ENCODE measurements at regions of chr19 and their contacts with region 1.

Region 1: DNA sequence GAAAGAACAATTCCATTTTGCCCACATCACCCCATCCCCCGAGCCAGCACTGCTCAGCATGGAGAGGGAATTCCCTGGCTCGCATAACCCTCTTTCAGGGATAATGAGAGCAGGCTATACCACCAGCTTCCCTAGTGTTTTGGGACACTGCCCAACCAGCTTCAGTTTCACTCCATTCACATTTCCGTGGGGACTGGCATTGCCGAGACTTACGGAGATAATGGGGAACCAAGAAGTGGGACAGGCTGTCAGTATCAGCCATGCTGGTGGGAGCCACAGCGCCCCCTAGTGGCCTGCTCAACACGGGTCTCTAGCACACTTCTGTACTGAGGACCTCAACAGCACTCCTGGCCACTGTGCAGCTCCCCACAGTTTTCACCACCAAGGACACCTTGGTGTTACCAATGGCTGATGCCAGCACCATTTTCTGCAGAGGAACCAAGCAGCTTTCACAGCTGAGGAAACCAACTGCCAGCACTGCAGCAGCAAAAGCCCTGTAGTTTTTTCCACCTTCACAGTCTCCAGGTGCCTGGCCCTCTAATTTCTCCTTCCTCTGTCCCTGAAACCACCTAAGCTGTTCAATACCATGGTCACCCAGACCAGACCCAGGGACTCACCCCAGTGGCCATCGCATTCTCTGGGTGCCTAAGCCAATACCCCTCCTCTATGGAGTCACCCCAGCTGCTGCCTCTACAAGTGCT is 23.7 kb downstream of the SLC6A16 start:
- DNase-seq: peak; percentile 43
- ATAC-seq: peak; percentile 88
- H3K4me3 ChIP-seq: peak overlapping the region; percentile 16; the same call in 1 of the 2 replicates
- H3K27ac ChIP-seq: no peak overlapping the region
- H3K4me1 ChIP-seq: no peaks in the 10 kb centered on the region
- H3K27me3 ChIP-seq: no peaks in the 10 kb centered on the region
- CTCF ChIP-seq: peak; percentile 70
- POLR2A ChIP-seq: no peak
- RAD21 ChIP-seq: peak; percentile 47

Region 2: DNA sequence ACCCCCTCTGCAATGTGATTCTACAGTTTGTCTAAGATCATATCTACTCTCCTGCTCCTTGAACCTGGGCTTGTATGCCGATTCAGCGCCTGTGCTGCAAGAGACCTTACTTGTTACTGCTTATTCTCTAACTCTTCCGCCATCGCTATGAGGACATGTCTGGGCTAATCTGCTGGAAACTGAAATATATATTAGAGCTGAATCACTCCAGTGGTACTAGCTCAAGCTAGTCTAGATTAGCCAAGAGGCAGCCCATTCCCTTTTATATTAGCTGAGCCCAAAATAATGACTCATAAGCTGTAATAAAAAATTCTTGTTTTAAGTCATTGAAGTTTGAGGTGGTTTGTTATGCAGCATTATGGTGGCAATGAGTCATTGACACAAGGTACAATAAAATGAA is 29.1 kb before region 1 on chr19:
- CTCF ChIA-PET with region 1: no interaction called
- POLR2A ChIA-PET with region 1: no interaction called
- dilution Hi-C with region 1: no loop called
- in situ Hi-C with region 1: no loop called
- intact Hi-C with region 1: loop called (anchors 2 kb)
- DNase-seq: peak; percentile 57
- ATAC-seq: no peak; the same call in 1 of the 2 replicates
- H3K4me3 ChIP-seq: no peak overlapping the region
- H3K27ac ChIP-seq: no peak overlapping the region
- H3K4me1 ChIP-seq: no peaks in the 10 kb centered on the region
- H3K27me3 ChIP-seq: peaks cover 6% of the 10 kb centered on the region
- CTCF ChIP-seq: no peak
- POLR2A ChIP-seq: no peak
- RAD21 ChIP-seq: no peak

Region 3: DNA sequence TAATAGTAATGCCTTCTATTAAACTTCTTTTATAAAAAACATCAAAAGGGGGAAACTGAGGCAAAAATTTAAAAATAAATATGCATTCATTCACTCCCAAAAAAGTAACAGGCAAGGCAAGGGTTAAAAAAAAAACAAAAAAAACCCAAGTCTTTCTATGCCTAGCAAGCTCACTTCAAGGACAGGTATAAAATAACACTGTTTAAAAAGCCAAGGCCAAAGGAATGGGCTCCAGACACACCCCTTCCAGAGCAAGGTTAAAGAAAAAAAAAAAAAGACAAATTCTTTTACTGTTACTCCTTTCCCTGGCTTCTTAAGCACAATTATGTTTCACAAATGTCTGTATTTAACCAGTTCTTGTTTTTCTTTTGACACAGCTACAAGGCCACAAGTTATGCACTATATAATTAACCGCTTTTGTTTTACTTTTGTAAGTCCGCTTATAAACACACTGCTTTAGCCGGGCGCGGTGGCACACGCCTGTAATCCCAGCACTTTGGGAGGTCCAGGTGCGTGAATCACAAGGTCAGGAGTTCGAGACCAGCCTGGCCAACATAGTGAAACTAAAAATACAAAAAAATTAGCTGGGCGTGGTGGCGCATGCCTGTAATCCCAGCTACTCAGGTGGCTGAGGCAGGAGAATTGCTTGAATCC is 656.1 kb after region 1 on chr19:
- CTCF ChIA-PET with region 1: no interaction called
- POLR2A ChIA-PET with region 1: no interaction called
- dilution Hi-C with region 1: no loop called
- in situ Hi-C with region 1: no loop called
- intact Hi-C with region 1: no loop called
- DNase-seq: no peak
- ATAC-seq: no peak
- H3K4me3 ChIP-seq: no peak overlapping the region
- H3K27ac ChIP-seq: no peak overlapping the region
- H3K4me1 ChIP-seq: no peaks in the 10 kb centered on the region
- H3K27me3 ChIP-seq: peaks cover 12% of the 10 kb centered on the region
- CTCF ChIP-seq: no peak
- POLR2A ChIP-seq: no peak
- RAD21 ChIP-seq: no peak

Measured in IMR-90 (cell line).